ENCODE measurements at regions of chr5 and their contacts with region 1.

Region 1: DNA sequence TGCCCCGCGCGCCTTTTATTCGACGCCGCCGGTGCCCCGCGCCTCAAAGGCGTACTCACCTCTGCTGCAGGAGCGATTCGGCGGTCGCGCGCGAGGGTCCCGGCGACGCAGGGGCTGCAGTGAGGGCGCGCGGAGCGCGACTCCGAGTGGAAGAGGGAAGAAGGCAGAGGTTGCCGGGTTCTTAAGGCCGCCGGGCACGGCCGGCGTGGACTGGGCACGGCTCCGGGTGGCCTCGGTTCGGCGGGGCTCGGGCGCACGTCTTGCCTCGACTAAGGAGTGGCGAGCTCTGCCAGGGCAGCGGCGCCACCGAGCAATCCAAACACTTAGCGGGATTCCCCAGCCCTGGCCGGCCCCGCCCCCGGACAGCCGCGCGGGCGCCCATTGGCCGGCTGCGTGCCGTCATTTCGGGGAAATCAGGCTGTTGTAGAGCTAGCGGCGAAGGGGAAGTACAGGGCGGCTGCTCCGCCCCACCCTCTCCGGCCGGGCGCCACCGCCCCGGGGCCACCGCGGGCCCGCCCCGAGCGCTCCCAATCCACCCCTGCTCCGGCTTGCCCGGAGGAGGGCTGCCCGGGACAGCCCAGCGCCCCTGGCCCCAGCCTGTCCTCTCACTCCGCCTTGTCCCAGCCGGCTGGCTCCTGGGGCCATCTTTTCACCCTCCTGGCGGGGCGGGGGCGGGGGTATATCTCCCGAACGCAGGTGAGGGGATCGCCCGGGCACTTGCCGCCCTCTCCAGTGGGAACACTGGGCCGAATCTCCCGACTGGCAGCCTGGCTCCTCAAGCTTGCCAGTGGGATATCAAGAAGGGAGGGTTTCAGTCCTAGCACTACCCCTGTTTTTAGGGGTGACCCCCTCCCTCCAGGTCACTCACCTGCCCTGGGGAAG is at the start of gene IRF1:
- DNase-seq: peak; percentile 97
- ATAC-seq: peak; percentile 68
- H3K4me3 Mint-ChIP-seq: peak within 1 kb of the TSS; percentile 96
- H3K27ac Mint-ChIP-seq: peak within 1 kb of the TSS; percentile 99
- H3K4me1 Mint-ChIP-seq: peaks cover 62% of the 10 kb centered on the region
- H3K27me3 Mint-ChIP-seq: no peaks in the 10 kb centered on the region
- CTCF ChIP-seq: no peak
- total RNA-seq, gene IRF1: 121 to 128 TPM

Region 2: DNA sequence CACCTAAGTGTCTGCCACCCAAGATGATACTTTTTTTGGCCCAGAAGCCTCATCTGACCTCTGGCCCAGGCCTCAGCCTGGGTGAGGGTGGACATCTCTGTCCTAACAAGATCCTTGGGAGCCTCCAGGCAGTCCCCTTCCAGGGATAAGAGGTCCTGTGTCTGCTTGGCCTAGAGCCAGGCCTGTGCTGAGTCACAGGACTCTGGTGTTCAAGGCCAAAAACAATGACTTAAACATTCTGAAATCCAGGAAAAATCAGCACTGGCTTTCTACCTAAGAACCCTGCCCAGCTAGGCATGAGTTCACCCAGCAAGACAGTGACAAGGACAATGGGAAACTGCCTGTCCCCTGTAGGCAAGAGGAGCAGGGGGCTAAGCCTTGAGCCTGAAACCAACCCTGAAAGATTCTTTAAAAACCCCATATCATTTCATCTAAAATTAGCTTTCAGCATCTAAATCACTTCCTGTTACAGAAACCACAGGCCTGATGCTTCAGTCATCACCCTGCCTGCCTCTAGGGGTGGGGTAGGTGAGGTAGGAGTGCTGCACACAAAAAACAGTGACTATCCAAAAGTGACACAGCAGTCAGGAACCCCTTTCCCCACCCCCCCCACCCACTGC is 387.3 kb before region 1 on chr5:
- CTCF ChIA-PET with region 1: no interaction called
- POLR2A ChIA-PET with region 1: interaction called, 4 read pairs
- intact Hi-C with region 1: loop called (anchors 10 kb)
- DNase-seq: peak; percentile 86
- ATAC-seq: peak; percentile 60
- H3K4me3 Mint-ChIP-seq: peak overlapping the region; percentile 47
- H3K27ac Mint-ChIP-seq: peak overlapping the region; percentile 90
- H3K4me1 Mint-ChIP-seq: peaks cover 80% of the 10 kb centered on the region
- H3K27me3 Mint-ChIP-seq: no peaks in the 10 kb centered on the region
- CTCF ChIP-seq: no peak

Region 3: DNA sequence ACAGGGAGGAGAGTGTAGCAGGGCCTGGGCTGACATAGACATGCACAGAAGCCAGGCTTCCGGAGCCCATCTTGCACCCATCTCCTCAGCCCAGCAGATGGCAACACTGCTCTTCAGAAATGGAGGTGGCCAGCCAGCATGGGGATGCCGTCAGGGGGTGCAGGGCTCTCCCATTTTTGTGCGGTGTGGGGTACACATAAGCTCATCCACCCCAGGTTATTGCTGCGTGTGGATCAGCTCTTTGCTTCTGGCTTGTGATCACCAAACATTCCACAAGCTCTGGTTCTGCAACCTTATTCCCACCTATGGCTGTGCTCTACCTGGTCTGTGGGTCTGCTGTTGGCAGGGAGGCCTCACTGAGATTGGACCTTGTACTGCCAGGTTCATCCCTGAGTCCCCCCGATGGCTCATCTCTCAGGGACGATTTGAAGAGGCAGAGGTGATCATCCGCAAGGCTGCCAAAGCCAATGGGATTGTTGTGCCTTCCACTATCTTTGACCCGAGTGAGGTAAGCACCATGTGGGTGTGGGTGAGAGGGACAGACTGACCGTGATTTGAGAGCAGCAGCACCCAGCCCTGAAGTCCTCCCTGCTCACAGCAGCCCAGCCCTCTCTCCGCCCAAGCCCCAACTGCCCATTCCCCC is 104.0 kb before region 1 on chr5:
- CTCF ChIA-PET with region 1: interaction called, 342 read pairs
- POLR2A ChIA-PET with region 1: interaction called, 61 read pairs
- intact Hi-C with region 1: no loop called
- DNase-seq: peak; percentile 87
- ATAC-seq: peak; percentile 92
- H3K4me3 Mint-ChIP-seq: no peak overlapping the region
- H3K27ac Mint-ChIP-seq: peak overlapping the region; percentile 25
- H3K4me1 Mint-ChIP-seq: peaks cover 40% of the 10 kb centered on the region
- H3K27me3 Mint-ChIP-seq: no peaks in the 10 kb centered on the region
- CTCF ChIP-seq: peak; percentile 91

Region 4: DNA sequence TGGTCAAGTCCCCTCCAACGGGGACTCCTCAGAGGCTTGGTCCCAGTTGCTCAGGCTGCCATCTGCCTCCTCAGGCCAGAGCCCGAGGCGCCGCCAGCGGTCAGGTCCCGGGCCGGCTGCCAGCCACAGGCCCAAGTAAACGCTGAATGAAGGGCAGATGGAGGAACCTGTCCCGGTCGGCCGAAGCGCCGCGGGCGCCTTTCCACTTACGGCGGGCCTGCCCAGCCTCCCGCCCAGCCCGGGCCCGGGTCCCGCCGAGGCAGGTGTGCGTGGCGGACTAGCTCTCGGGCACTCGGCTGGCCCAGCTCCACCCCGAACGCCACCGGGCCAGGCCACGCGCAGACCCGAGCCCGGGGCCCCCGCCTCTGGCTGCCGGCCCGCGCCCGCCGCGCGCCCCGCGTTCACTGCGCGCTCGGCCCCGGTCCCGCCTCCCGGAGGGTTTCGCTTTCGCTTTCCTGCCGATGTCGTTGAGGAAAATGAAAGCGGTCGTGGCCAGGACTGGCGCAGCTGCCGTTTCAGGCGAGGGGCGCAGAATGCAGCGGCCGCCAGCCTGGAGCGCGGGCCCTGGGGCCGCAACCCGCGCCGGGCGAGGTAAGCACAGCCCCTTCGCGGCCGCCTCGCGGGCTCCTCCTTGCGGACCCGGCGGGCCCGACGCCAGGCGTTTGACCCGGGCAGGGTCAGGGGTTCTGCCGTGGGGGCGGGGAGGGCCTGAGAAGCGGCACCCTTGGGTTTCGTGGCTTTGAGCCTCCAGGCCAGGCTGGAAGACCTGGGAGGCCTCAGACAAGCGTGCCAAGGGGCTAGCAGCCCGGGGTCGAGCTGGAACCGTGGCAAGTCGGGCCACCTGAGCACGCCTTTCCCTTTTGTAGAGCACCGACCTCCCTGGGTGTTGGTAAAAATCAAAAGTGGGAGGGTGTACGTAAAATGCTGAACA is 80.0 kb before region 1 on chr5:
- CTCF ChIA-PET with region 1: interaction called, 14 read pairs
- POLR2A ChIA-PET with region 1: interaction called, 393 read pairs
- intact Hi-C with region 1: loop called (anchors 2 kb)
- DNase-seq: peak; percentile 89
- ATAC-seq: peak; percentile 71
- H3K4me3 Mint-ChIP-seq: peak overlapping the region; percentile 93
- H3K27ac Mint-ChIP-seq: peak overlapping the region; percentile 100
- H3K4me1 Mint-ChIP-seq: peaks cover 63% of the 10 kb centered on the region
- H3K27me3 Mint-ChIP-seq: no peaks in the 10 kb centered on the region
- CTCF ChIP-seq: peak; percentile 53

Region 5: DNA sequence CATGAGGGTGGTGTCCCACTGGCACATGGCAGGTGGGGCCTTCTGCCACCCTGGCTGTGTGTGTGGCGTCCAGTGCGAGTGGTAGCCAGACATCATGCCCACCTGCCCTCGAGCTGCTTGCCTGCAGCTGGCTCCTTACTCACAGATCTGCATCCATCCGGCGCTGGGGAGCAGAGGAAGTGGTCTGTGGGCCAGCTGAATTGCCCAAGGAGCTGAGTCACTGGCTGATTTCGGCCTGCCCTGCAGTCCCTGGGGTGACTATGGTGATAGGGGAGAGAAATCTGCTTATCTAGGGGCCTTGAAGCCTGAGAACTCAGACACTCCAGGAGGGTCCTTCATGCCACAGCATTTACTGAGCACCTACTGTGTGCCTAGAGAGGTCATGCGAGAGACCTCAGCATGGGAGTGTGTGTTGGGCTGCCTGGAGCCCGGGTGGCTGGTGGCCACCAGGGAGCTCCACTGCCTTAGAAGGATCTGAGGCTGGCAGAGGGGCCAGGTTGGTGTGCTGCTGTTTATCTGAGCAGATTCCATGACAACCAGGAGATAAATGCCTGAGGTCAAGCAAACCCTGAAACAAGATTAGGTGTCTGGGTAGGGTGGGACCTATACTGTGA is 64.1 kb before region 1 on chr5:
- CTCF ChIA-PET with region 1: interaction called, 67 read pairs
- POLR2A ChIA-PET with region 1: interaction called, 1,131 read pairs
- intact Hi-C with region 1: loop called (anchors 5 kb)
- DNase-seq: peak; percentile 92
- ATAC-seq: peak; percentile 56
- H3K4me3 Mint-ChIP-seq: peak overlapping the region; percentile 70
- H3K27ac Mint-ChIP-seq: peak overlapping the region; percentile 93
- H3K4me1 Mint-ChIP-seq: peaks cover 96% of the 10 kb centered on the region
- H3K27me3 Mint-ChIP-seq: no peaks in the 10 kb centered on the region
- CTCF ChIP-seq: peak; percentile 42

Region 6: GRCh38 chr5:132456296-132457001 is 34.3 kb before region 1 on chr5:
- CTCF ChIA-PET with region 1: interaction called, 4 read pairs
- POLR2A ChIA-PET with region 1: interaction called, 1,641 read pairs
- intact Hi-C with region 1: loop called (anchors 5 kb)
- DNase-seq: peak; percentile 79
- ATAC-seq: peak; percentile 59
- H3K4me3 Mint-ChIP-seq: peak overlapping the region; percentile 38
- H3K27ac Mint-ChIP-seq: peak overlapping the region; percentile 94
- H3K4me1 Mint-ChIP-seq: peaks cover 85% of the 10 kb centered on the region
- H3K27me3 Mint-ChIP-seq: no peaks in the 10 kb centered on the region
- CTCF ChIP-seq: no peak

Region 7: DNA sequence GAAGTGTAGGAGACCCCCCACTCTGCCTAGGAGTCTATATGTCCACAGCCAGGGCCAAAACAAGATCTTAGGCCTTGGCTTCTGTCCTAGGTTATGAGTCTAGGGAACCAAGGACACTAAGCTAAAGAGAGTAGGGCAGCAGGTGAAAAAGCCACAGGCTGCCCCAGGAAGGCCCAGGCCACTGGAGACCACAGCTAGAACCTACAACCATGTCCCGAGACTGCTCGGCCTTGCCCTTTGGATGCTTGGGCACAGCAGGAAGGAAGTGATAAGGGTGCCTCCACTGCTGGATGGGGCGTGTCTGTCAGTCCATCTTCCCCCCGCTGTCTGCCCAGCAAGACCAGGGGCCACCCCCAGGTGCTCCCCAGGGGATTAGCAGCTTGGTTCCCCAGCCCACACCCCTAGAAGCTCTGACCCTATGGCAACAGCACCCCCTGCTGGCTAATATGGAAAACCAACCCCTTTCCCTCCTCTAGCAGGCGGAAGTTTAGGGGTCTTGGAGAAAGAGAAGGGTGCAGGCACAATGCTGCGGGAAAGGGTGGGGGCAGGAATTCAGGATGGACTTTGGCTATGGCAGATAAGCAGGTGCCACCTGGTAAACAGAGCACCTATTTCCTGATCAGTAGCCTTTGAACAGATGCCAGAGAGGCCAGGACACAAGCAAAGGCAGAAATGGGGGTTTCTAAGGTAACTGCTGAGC is 10.4 kb after region 1 on chr5:
- CTCF ChIA-PET with region 1: interaction called, 11 read pairs
- POLR2A ChIA-PET with region 1: interaction called, 1,641 read pairs
- intact Hi-C with region 1: no loop called
- DNase-seq: peak; percentile 83
- ATAC-seq: peak; percentile 40
- H3K4me3 Mint-ChIP-seq: no peak overlapping the region
- H3K27ac Mint-ChIP-seq: peak overlapping the region; percentile 71
- H3K4me1 Mint-ChIP-seq: peaks cover 36% of the 10 kb centered on the region
- H3K27me3 Mint-ChIP-seq: peaks cover under 1% of the 10 kb centered on the region
- CTCF ChIP-seq: peak; percentile 89

Measured in activated CD8-positive, alpha-beta T cell treated with anti-CD3 and anti-CD28 coated beads for 36 hours (primary cell).